ENCODE measurements at regions of chr3 and their contacts with region 1.

Region 1: DNA sequence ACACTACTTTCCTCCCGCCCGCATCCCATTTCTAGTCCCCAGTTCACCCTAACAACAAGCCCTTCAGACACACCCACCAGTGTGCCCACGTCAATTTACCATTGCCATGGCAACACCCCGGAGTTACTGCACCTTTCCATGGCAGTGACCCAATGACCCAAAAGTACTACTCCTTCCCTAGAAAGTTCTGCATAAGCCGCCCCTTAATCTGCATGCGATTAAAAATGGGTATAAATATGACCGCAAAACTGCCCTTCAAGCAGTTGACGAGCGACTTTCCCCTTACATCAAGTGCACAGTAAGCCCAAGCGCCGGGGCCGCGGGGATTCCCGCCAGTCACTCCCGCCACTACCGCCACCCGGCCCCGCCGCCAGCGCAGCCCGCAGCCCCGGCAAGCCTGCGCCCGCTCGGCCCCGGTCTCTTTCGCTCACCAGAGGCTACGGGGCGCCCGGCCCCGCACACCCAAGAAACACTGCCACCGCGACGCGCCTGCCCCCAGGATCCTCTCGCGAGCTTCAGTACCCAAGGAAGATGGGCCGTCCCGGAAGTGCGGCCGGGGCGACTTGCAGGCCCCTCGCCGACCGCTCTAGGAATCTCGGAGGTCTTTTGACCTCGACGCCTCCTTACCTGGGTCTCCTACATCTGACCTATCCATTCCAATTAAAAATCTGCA is 27.2 kb upstream of the ZNF502 start:
- DNase-seq: peak; percentile 85
- ATAC-seq: peak; percentile 86
- H3K4me3 ChIP-seq: peak overlapping the region; percentile 46 to 72 (median 70)
- H3K4me3 Mint-ChIP-seq: peak overlapping the region; percentile 91
- H3K27ac ChIP-seq: peak overlapping the region in 1 of 2 donors; percentile 78
- H3K27ac Mint-ChIP-seq: peak overlapping the region; percentile 69
- H3K4me1 ChIP-seq: peaks cover 11% of the 10 kb centered on the region in 2 donors
- H3K4me1 Mint-ChIP-seq: peaks cover 21% of the 10 kb centered on the region
- H3K27me3 ChIP-seq: peaks cover 0 to 17% (median 8%) of the 10 kb centered on the region in 4 experiments
- H3K27me3 Mint-ChIP-seq: peaks cover 20% of the 10 kb centered on the region
- CTCF ChIP-seq: no peak

Region 2: DNA sequence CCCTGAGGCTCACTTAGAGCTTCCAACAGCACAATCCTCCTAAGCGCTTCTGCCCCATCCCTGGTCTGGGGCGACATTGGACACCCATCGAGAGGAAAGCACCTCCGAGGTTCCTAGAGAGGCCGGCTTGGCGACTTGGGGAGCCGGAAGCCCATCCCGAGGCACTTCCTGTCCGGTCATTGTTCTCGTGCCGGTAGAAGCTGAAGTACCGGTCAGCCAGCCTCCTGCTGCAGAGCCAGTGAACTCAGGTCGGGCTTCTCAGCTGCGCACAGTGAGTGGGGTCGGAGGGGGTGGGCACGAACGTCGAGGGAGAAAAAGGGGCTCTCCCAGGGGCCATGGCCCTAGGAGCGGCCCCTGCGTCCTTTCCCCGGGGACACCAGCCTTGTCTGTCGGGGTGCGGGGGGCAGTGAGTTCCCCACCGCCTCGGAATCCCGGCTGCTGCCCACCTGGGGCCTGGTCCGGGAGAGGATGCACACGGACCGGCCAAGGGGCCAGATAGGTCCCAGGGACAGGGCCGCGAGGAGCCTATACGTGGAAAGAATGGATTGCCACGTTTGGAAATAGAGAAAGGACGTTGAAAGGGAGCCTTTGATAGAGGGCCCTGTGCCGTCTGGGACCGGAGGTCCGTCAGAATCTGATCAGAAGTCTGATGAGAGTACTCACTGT is 36.6 kb before region 1 on chr3 and contains the start of gene ZNF35:
- CTCF ChIA-PET with region 1: interaction called, 3 read pairs
- POLR2A ChIA-PET with region 1: no interaction called
- intact Hi-C with region 1: loop called (anchors 1 kb)
- DNase-seq: peak; percentile 67
- ATAC-seq: peak; percentile 84
- H3K4me3 ChIP-seq: peak within 1 kb of the TSS; percentile 43 to 95 (median 86)
- H3K4me3 Mint-ChIP-seq: peak within 1 kb of the TSS; percentile 96
- H3K27ac ChIP-seq: peak within 1 kb of the TSS; percentile 27 to 74
- H3K27ac Mint-ChIP-seq: peak within 1 kb of the TSS; percentile 80
- H3K4me1 ChIP-seq: peaks cover 8 to 15% of the 10 kb centered on the region in 2 donors
- H3K4me1 Mint-ChIP-seq: peaks cover 23% of the 10 kb centered on the region
- H3K27me3 ChIP-seq: no peaks in the 10 kb centered on the region
- H3K27me3 Mint-ChIP-seq: no peaks in the 10 kb centered on the region
- CTCF ChIP-seq: no peak
- total RNA-seq, gene ZNF35: 12.1 and 16.6 TPM in 2 replicates

Region 3: GRCh38 chr3:44712455-44713075 is 27.3 kb after region 1 on chr3 and contains the start of gene ZNF502:
- CTCF ChIA-PET with region 1: no interaction called
- POLR2A ChIA-PET with region 1: no interaction called
- intact Hi-C with region 1: loop called (anchors 1 kb)
- DNase-seq: peak; percentile 79
- ATAC-seq: peak; percentile 84
- H3K4me3 ChIP-seq: peak within 1 kb of the TSS; percentile 67 to 75 (median 71)
- H3K4me3 Mint-ChIP-seq: peak within 1 kb of the TSS; percentile 91
- H3K27ac ChIP-seq: peak within 1 kb of the TSS; percentile 38 to 44
- H3K27ac Mint-ChIP-seq: peak within 1 kb of the TSS; percentile 73
- H3K4me1 ChIP-seq: peaks cover 3 to 16% of the 10 kb centered on the region in 2 donors
- H3K4me1 Mint-ChIP-seq: peaks cover 15% of the 10 kb centered on the region
- H3K27me3 ChIP-seq: peaks cover 0 to 11% (median 3%) of the 10 kb centered on the region in 4 experiments
- H3K27me3 Mint-ChIP-seq: peaks cover 20% of the 10 kb centered on the region
- CTCF ChIP-seq: no peak
- total RNA-seq, gene ZNF502: 5.4 and 5.5 TPM in 2 replicates

Measured in B cell (primary cell).